Dorsolateral prefrontal cortex (tissue), 120 donors: ENCODE measurements at regions of chr5 and their contacts with region 1.

Region 1: GRCh38 chr5:81251922-81252321 is 18.8 kb downstream of the CKMT2 start:
- DNase-seq: no peak
- H3K4me3 ChIP-seq: no peak overlapping the region
- H3K27ac ChIP-seq: peak overlapping the region in 4 of 59 donors; percentile 9 to 37 (median 33)
- H3K27me3 ChIP-seq: no peaks in the 10 kb centered on the region
- CTCF ChIP-seq: no peak

Region 2: GRCh38 chr5:81292130-81292529 is 40.2 kb after region 1 on chr5:
- intact Hi-C with region 1: loop called in 1 of 2 experiments (anchors 5 kb)
- DNase-seq: no peak
- H3K4me3 ChIP-seq: no peak overlapping the region
- H3K27ac ChIP-seq: no peak overlapping the region
- H3K27me3 ChIP-seq: no peaks in the 10 kb centered on the region
- CTCF ChIP-seq: no peak